ENCODE measurements at regions of chr2 and their contacts with region 1.

Region 1: DNA sequence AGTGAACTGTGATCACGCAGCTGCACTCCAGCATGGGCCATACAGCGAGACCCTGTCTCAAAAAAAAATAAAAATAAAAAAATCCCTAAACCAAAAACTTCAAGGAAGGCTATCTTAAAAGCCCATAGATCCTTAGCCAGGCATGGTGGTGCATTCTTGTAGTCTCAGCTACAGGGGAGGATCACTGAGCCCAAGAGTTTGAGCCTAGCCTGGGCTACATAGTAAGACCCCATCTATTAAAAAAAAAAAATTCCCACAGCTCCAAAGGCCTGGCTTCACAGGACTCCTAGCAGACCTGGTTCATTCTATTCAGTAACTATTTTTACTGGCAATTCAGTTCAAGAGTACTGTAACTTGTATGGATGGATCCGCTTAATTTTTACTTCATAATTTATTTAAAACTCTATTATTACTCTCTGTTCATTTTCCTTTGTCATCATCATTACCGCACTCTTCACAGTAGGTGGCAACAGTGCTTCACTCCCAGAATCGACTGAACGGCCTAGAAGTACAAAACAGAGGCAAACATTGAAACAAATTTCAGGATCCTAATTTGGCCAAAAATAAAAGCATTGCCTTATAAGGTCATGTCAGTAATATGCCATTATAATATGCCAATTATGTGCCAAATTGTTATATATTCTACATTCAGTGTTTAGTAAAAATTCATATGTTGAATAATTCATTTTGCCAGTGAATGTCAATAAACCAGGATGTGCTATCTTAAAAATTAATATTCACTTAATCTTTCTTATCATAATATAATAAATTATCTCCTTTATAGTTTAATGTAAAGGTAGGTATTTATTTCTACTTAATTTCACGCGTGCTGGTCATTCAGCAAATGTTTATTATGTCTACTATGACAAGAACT is 14.3 kb upstream of the STAM2 start:
- DNase-seq: no peak
- ATAC-seq: peak; percentile 84
- H3K4me3 ChIP-seq: no peak overlapping the region
- H3K27ac ChIP-seq: no peak overlapping the region
- H3K4me1 ChIP-seq: no peaks in the 10 kb centered on the region
- H3K27me3 ChIP-seq: no peaks in the 10 kb centered on the region

Region 2: GRCh38 chr2:152298754-152299153 is 108.9 kb after region 1 on chr2:
- intact Hi-C with region 1: no loop called
- DNase-seq: no peak
- ATAC-seq: no peak
- H3K4me3 ChIP-seq: no peak overlapping the region
- H3K27ac ChIP-seq: no peak overlapping the region
- H3K4me1 ChIP-seq: no peaks in the 10 kb centered on the region
- H3K27me3 ChIP-seq: no peaks in the 10 kb centered on the region

Region 3: DNA sequence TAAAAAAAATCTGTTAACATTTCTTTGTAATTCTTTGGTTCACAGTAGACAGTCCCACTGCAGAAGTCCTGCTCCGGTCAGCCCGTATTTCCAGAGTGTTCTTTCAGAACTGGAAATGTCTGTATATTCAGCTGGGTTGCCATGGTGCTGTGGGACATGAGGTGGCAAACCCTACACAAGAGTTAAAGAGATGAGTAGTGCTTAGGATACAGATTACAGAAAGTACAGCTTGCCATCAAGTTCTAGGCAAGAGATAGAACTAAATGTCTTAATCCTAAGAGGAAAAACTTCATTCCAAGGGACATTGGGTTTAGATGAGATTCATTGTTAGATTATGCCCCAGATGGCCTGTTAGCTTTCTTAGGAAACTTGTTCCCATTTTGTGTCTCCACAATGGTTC is 205.2 kb after region 1 on chr2:
- intact Hi-C with region 1: loop called in 1 of 2 experiments (anchors 10 kb)
- DNase-seq: no peak
- ATAC-seq: peak; percentile 40
- H3K4me3 ChIP-seq: no peak overlapping the region
- H3K27ac ChIP-seq: peak overlapping the region; percentile 72 to 87
- H3K4me1 ChIP-seq: peaks cover 3 to 5% of the 10 kb centered on the region in 2 donors
- H3K27me3 ChIP-seq: no peaks in the 10 kb centered on the region

Region 4: GRCh38 chr2:152627351-152627957 is 437.6 kb after region 1 on chr2:
- intact Hi-C with region 1: loop called in 1 of 2 experiments (anchors 2 kb)
- DNase-seq: no peak
- ATAC-seq: no peak
- H3K4me3 ChIP-seq: no peak overlapping the region
- H3K27ac ChIP-seq: no peak overlapping the region
- H3K4me1 ChIP-seq: peaks cover 0 to under 1% of the 10 kb centered on the region in 2 donors
- H3K27me3 ChIP-seq: no peaks in the 10 kb centered on the region

Region 5: DNA sequence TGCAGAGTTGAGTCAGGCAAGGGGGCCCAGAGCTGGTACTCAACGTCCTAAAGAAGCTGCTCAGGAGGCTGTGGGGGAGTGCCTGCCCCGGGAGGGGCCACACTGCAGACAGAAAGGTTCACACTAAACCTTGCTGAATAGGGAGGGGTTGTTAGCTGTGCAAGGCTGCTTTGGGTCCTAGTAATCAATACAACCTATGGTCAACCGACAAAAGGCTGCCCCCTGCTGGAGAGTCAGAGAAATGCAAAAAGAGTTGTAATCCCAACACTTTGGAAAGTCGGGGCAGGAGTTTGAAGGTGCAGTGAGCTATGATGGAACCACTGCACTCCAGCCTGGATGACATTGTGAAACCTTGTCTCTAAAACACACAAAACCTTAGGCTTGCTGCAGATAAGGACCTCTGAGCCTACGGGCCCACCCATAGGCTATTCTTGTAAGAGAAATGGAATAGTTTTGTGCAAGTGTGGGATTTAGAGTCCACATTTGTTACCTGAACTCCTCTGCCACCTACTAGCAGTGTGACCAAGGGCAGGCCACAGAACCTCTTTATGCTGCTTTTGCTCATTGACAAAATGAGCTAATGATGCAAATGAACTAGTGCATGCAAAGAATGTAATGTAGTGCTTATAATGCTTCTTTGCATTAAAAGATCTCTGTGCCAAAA is 445.9 kb after region 1 on chr2:
- intact Hi-C with region 1: loop called (anchors 2 kb)
- DNase-seq: peak; percentile 64 to 77
- ATAC-seq: peak; percentile 76
- H3K4me3 ChIP-seq: no peak overlapping the region
- H3K27ac ChIP-seq: no peak overlapping the region
- H3K4me1 ChIP-seq: no peaks in the 10 kb centered on the region
- H3K27me3 ChIP-seq: no peaks in the 10 kb centered on the region

Region 6: GRCh38 chr2:153145470-153145978 is 955.7 kb after region 1 on chr2:
- intact Hi-C with region 1: no loop called
- DNase-seq: no peak
- ATAC-seq: no peak
- H3K4me3 ChIP-seq: no peak overlapping the region
- H3K27ac ChIP-seq: no peak overlapping the region
- H3K4me1 ChIP-seq: no peaks in the 10 kb centered on the region
- H3K27me3 ChIP-seq: no peaks in the 10 kb centered on the region